ENCODE measurements at regions of chr4 and their contacts with region 1.

Region 1: DNA sequence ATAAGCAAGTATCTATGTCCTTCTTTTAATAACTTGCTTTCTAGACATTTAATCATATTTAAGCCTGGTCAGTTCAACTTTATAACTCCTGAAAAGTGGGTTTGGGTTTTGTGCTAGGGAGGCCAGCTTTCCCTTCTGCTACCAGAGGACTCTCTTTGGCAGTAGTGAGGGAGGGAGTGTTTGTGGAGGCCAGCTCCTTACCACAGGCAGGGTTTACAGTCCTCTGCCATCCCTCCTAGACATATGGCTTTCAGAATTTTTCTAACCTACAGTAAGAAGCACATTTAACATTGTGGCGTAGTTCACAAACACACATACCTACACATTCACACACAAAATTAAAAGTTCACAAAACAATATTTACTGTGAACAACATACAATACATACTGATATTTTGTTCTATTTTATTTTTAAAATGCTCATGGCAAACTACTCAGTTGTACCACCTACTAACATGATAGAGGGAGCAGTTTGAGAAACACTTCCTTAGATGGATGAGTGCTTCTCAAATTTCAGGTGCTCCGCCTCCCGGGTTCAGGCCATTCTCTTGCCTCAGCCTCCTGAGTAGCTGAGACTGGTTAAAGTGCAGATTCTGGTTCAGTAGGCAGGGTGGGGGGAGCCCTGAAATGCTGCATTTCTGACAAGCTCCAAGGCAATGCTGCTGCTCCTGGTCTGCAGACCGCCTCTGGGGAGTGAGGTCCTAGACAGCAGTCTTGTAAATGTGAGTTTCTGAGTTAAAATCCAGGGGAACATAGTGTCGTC is 86.7 kb downstream of the PTTG2 start:
- DNase-seq: no peak
- H3K4me3 ChIP-seq: no peak overlapping the region
- H3K27ac ChIP-seq: no peak overlapping the region
- H3K4me1 ChIP-seq: peaks cover 0 to 4% (median 0%) of the 10 kb centered on the region in 4 experiments; a peak in 3 of 7 replicates
- H3K27me3 ChIP-seq: no peaks in the 10 kb centered on the region
- CTCF ChIP-seq: no peak
- EP300 ChIP-seq: no peak
- POLR2A ChIP-seq: no peak
- RAD21 ChIP-seq: no peak

Region 2: DNA sequence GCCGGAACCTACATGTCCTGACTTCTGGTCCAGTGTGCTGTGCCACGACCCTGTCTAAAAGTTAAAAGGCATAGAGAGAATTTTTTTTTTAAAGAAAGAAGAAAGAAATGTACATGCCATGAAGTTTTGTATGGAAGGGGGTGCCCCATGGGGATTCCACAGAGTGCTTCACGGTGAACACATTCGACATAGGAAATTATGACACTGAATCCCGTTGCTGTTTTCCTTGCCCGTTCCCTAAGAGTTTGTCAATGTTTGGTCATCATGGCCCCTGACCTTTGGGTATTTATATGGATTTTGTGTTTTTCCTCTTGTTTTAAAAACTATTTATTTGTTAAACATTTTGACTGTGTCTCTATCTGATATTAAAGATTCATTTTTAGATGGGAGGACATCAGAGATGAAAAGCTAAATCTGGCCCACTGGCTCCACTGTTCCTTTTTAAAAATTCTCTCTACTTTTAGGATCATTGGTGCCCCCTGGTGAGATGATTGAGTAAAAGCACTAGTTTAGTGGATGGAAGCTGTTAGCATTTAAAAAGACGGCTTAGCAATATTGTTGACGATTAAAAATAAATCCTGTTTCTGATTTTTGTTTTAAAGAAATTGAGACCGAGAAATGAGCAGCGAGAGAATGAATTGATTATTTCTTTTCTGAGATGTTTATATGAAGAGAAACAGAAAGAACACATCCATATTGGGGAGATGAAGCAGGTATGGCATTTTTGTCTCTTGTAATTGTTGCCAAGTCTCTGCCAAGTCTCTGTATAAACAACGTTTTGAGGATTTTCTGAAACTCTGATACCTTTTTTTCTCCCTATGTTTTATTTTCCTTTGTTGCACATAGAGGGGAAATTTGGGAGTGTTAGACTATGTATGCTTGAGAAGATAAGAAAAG is 11.7 kb before region 1 on chr4:
- CTCF ChIA-PET with region 1: interaction called, 19 read pairs
- POLR2A ChIA-PET with region 1: no interaction called
- DNase-seq: no peak
- H3K4me3 ChIP-seq: no peak overlapping the region
- H3K27ac ChIP-seq: no peak overlapping the region
- H3K4me1 ChIP-seq: no peaks in the 10 kb centered on the region
- H3K27me3 ChIP-seq: no peaks in the 10 kb centered on the region
- CTCF ChIP-seq: peak in 2 of 3 experiments; percentile 49 to 52; a peak in 2 of 4 replicates
- EP300 ChIP-seq: no peak
- POLR2A ChIP-seq: no peak
- RAD21 ChIP-seq: peak; percentile 79 to 82

Measured in H1 (cell line).